ENCODE measurements at regions of chr10 and their contacts with region 1.

Region 1: DNA sequence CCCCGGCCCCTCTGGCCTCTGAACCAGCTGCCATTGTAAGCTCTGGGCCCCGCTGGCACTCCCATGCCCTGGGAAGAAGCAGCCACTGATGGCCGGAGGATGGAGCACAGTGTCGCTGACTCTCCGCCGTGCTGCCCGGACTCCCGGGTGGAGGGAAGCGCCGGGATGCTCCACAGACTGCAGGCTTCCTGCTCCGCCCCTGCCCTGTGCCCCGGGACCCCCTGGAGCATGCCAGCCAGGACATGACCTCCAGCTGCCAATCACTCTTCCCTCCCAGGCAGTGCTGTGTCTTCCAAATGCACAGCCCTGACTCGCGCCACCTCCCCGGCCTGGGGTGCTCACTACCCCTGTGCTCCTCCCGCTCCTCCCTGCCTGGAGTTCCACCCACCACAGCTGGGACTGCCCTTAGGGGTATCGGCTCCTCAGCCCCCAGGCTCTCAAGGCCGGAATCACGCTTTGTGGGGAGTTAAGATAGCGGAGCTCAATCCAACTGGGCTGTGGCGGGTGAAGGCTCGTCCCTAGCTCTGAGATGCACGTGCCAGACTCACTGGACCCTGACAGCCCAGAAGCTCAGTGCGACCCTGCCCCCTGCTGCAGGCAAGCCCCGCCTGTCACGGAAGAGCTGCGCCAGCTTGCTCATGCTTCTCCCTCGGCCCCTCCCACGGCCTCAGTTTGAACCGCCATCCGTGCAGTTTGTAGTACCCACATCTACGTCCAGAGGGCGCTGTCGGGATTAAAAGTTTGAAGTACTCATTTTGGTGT is 142.3 kb upstream of the TCERG1L start:
- DNase-seq: peak; percentile 21
- ATAC-seq: peak; percentile 76
- H3K4me3 ChIP-seq: no peak overlapping the region
- H3K27ac ChIP-seq: no peak overlapping the region
- H3K4me1 ChIP-seq: no peaks in the 10 kb centered on the region
- H3K27me3 ChIP-seq: peaks cover 4% of the 10 kb centered on the region; the same call in 1 of the 2 replicates
- CTCF ChIP-seq: peak; percentile 42 to 57 (median 52); a peak in 5 of 6 replicates
- POLR2A ChIP-seq: no peak
- RAD21 ChIP-seq: peak; percentile 52

Region 2: DNA sequence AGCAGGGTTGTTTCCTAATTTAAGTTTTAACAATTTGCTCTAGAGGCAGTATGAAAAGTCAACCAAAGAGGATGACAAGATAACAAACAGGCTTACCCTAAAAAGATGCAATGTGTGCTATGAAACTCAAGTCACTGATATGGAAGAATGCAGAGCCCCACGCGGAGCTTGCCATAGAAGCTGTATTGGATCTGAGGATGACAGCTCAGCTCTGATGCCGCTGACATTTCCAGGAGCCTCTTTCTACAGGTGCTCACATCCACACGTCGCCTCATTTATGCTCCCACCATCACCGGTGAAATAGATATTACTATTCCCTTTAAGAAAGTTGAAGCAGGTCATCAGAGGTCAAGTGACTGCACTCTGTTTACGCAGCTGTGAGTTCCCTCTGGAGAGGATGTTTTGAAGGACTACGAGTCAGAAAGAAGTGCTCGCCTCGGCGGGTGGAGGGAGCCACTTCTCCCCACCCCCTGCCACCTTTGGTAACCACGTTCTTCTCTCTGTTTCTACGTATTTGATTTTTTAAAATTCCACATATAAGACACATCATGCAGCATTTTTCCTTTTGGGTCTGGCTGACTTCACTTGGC is 1042.2 kb before region 1 on chr10:
- CTCF ChIA-PET with region 1: no interaction called
- POLR2A ChIA-PET with region 1: no interaction called
- RAD21 ChIA-PET with region 1: no interaction called
- intact Hi-C with region 1: no loop called
- DNase-seq: no peak
- ATAC-seq: no peak
- H3K4me3 ChIP-seq: no peak overlapping the region
- H3K27ac ChIP-seq: no peak overlapping the region
- H3K4me1 ChIP-seq: no peaks in the 10 kb centered on the region
- H3K27me3 ChIP-seq: no peaks in the 10 kb centered on the region
- CTCF ChIP-seq: no peak
- POLR2A ChIP-seq: no peak
- RAD21 ChIP-seq: no peak

Region 3: GRCh38 chr10:131569851-131570715 is 116.3 kb after region 1 on chr10:
- CTCF ChIA-PET with region 1: interaction called, 4 read pairs
- POLR2A ChIA-PET with region 1: no interaction called
- RAD21 ChIA-PET with region 1: no interaction called
- intact Hi-C with region 1: loop called (anchors 5 kb)
- DNase-seq: no peak
- ATAC-seq: peak; percentile 44; the same call in 1 of the 2 replicates
- H3K4me3 ChIP-seq: no peak overlapping the region
- H3K27ac ChIP-seq: no peak overlapping the region
- H3K4me1 ChIP-seq: no peaks in the 10 kb centered on the region
- H3K27me3 ChIP-seq: no peaks in the 10 kb centered on the region; the same call in 1 of the 2 replicates
- CTCF ChIP-seq: peak; percentile 36 to 52 (median 40); a peak in 5 of 6 replicates
- POLR2A ChIP-seq: no peak
- RAD21 ChIP-seq: peak; percentile 71

Region 4: DNA sequence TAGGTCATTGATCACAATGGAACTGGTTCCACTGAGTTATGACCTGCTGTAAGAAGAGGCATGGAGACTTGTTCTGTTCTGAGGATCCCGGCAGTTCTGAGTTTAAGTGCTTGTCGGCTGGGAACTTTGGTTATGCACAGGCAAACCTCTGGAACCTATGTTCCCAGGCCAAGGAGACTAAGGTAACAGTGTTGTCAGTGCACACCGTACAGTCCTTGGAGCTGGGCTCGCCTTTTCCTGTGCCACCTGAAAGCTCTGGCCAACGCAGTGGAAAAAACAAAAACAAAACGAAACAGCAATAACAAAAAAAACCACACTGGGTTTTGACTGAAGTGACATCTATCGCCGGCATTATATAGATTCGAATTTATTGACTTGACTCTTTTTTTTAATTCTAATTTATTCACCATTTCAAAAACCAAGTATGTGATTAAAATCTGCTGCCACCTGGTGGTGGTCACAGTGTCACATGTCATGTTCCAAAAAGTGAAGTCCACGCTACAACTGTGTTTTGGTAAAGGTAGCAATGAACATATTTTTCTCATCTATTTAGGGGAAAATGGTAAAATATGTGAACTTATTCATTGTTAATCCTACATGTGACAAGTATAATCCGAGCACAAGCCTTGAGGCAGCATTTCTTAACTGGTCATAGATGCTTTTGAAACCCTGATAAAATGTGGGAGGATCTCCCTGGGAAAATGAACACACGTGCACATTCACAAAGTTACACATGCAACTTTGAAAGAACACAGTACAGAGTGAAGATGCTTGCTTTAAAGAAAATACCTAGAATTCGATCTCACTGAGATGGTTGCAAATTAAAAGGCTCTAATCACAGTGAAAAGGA is 333.2 kb after region 1 on chr10:
- CTCF ChIA-PET with region 1: no interaction called
- POLR2A ChIA-PET with region 1: no interaction called
- RAD21 ChIA-PET with region 1: no interaction called
- intact Hi-C with region 1: loop called (anchors 1 kb)
- DNase-seq: peak; percentile 8
- ATAC-seq: 0 out of 2 replicates have a peak, but pooled peaks have one; percentile 38
- H3K4me3 ChIP-seq: no peak overlapping the region
- H3K27ac ChIP-seq: no peak overlapping the region
- H3K4me1 ChIP-seq: no peaks in the 10 kb centered on the region
- H3K27me3 ChIP-seq: no peaks in the 10 kb centered on the region
- CTCF ChIP-seq: peak; percentile 35 to 62 (median 40); a peak in 4 of 6 replicates
- POLR2A ChIP-seq: no peak
- RAD21 ChIP-seq: peak; percentile 52

Region 5: DNA sequence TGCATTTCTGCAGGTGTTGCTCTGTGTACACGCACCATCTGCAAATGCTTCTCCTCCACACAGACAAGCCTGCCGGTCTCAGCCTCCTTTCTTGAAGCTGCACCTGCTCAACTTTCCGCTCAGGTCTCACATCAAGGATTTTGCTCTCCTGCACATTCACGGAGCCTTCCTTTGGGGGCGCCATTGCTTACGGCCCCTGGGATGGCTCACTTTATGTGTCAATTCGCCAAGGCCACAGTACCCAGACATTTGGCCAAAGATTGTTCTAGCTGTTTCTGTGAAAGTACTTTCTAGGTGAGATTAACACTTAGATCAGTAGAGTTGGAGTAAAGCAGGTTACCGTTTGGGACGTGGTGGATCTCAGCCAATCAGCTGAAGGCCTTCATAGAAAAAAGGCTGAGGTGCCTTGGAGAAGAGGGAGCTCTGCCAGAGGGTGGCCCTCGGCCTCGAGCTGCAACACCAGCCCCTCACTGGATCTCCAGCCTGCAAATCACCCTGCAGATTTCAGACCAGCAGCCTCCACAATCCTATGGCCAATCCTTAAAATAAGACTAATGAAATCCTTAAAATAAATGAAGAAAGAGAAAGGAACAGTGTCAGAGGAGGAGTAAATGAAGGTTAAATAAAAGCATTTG is 407.1 kb after region 1 on chr10:
- CTCF ChIA-PET with region 1: no interaction called
- POLR2A ChIA-PET with region 1: no interaction called
- RAD21 ChIA-PET with region 1: no interaction called
- intact Hi-C with region 1: no loop called
- DNase-seq: no peak
- ATAC-seq: peak; percentile 36; the same call in 1 of the 2 replicates
- H3K4me3 ChIP-seq: no peak overlapping the region
- H3K27ac ChIP-seq: no peak overlapping the region
- H3K4me1 ChIP-seq: no peaks in the 10 kb centered on the region
- H3K27me3 ChIP-seq: no peaks in the 10 kb centered on the region
- CTCF ChIP-seq: peak in 2 of 3 experiments; percentile 32 to 37; a peak in 1 of 6 replicates
- POLR2A ChIP-seq: no peak
- RAD21 ChIP-seq: 0 out of 2 replicates have a peak, but pooled peaks have one; percentile 9